ENCODE measurements at regions of chr5 and their contacts with region 1.

Region 1: GRCh38 chr5:76544268-76544926 is 78.8 kb downstream of the F2RL2 start:
- DNase-seq: peak; percentile 70
- H3K4me3 Mint-ChIP-seq: no peak overlapping the region
- H3K27ac Mint-ChIP-seq: no peak overlapping the region
- H3K4me1 Mint-ChIP-seq: peaks cover 48% of the 10 kb centered on the region
- H3K27me3 Mint-ChIP-seq: peaks cover 18% of the 10 kb centered on the region
- CTCF ChIP-seq: peak; percentile 81

Region 2: DNA sequence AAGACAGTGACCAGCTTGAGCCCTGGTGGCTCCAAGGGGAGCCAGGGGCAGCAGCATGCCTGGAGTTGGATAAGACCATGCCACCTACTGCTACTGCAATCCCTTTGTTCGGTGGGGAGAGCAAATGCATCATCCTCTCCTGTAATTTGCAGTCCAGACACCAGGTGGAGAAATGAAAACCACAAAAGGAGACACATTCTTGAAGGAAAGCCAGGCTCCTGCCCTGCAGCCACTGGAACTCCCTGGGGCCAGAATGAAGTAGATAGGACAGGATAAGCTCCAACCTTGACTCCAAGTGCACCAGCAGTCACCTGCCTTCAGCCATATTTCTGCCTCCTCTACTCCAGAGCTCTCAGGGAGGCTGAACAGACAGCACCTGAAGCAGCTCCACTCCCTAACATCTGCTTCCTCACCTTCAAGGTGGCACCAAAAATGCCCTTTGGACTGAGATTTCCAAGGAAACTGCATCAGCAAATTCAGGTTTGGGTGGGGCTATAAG is 206.4 kb before region 1 on chr5:
- CTCF ChIA-PET with region 1: interaction called, 11 read pairs
- intact Hi-C with region 1: loop called (anchors 1 kb)
- DNase-seq: peak; percentile 79
- H3K4me3 Mint-ChIP-seq: no peak overlapping the region
- H3K27ac Mint-ChIP-seq: no peak overlapping the region
- H3K4me1 Mint-ChIP-seq: peaks cover 9% of the 10 kb centered on the region
- H3K27me3 Mint-ChIP-seq: no peaks in the 10 kb centered on the region
- CTCF ChIP-seq: peak; percentile 70

Region 3: DNA sequence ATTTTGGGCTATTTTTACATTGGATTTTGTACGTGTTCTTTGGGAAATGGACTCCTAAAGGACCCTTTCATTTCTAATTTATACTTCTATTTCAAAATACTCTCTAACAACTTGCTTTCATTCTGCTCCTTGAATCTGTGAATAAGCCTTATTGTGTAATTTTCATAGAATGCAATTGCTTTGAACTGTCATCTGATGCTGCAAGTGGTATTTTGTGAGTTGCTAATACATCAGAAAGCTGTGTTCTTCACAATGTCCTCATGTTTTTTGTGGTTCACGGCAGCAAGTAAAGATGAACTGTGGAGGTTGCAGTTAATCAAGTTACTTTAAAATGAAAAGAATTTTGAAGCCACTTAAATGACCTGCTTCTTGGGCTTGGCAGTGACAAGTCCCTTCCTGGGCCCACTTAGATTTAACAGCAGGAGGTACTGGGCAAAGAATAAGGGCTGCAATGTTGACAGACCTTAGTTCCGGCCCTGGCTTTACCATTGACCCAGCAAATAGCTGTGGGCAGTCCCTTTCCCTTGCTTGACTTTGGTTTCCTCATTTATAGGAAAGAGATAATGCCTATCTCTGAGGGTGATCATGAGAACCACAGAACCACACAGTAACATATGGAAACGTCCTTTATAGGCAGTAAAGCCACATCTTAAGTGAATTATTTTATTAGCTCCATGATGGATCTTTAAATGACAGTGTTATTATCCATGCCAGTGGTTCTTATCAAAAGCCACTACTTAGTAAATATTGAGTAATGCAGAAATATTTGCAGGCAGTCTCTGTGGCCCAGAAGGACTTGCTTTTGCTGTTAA is 86.5 kb before region 1 on chr5:
- CTCF ChIA-PET with region 1: no interaction called
- intact Hi-C with region 1: loop called (anchors 5 kb)
- DNase-seq: peak; percentile 45
- H3K4me3 Mint-ChIP-seq: no peak overlapping the region
- H3K27ac Mint-ChIP-seq: peak overlapping the region; percentile 7
- H3K4me1 Mint-ChIP-seq: peaks cover 37% of the 10 kb centered on the region
- H3K27me3 Mint-ChIP-seq: no peaks in the 10 kb centered on the region
- CTCF ChIP-seq: no peak

Region 4: GRCh38 chr5:76582230-76583162 is 38.1 kb after region 1 on chr5:
- CTCF ChIA-PET with region 1: interaction called, 5 read pairs
- intact Hi-C with region 1: loop called (anchors 2 kb)
- DNase-seq: no peak
- H3K4me3 Mint-ChIP-seq: no peak overlapping the region
- H3K27ac Mint-ChIP-seq: no peak overlapping the region
- H3K4me1 Mint-ChIP-seq: no peaks in the 10 kb centered on the region
- H3K27me3 Mint-ChIP-seq: no peaks in the 10 kb centered on the region
- CTCF ChIP-seq: no peak

Region 5: DNA sequence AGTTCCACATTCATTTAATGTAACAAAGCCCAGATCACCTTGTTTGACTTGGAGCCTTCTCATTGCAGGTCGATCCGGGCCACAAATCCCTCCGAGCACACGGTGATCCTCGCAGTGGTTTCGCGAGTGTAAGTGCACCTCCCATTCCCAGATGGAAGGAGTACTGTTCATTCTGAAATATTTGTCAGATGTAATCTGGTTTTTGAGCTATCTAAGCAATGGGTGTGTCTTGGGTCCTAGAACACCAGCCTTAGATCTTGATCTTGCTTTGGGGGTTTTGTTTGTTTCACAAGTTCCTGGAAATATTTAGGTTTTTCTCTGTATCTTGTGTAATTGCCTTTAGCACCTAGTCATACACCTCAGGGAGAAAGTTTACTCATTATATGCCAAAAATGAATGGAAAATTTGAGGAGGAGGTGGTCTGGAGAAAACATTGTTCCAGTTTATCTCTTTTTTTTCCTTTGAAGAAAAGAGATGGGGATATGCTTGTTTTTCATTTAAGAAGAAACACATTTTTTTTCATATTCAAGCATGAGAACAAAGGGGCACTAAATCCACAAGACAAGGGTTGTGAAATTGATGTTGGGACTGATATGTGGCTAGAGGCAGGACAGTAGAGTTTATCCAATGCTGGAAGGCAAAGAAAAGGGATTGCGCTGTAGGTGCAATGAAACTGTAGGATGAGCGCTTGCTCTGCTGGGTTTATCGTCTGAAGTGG is 784.7 kb after region 1 on chr5:
- CTCF ChIA-PET with region 1: no interaction called
- intact Hi-C with region 1: no loop called
- DNase-seq: no peak
- H3K4me3 Mint-ChIP-seq: no peak overlapping the region
- H3K27ac Mint-ChIP-seq: no peak overlapping the region
- H3K4me1 Mint-ChIP-seq: no peaks in the 10 kb centered on the region
- H3K27me3 Mint-ChIP-seq: peaks cover 30% of the 10 kb centered on the region
- CTCF ChIP-seq: no peak